Ovary (tissue), 10 donors: ENCODE measurements at regions of chr11 and their contacts with region 1.

Region 1: GRCh38 chr11:10307442-10308207 is 2.8 kb downstream of the ADM start:
- DNase-seq: peak; percentile 85 to 92 (median 90)
- H3K4me3 ChIP-seq: peak overlapping the region; percentile 70
- H3K27ac ChIP-seq: peak overlapping the region in 1 of 2 donors; percentile 76
- H3K4me1 ChIP-seq: peaks cover 10% of the 10 kb centered on the region
- H3K27me3 ChIP-seq: no peaks in the 10 kb centered on the region
- CTCF ChIP-seq: peak; percentile 96 to 98 (median 98)
- EP300 ChIP-seq: no peak
- POLR2A ChIP-seq: no peak

Region 2: GRCh38 chr11:9757809-9758636 is 549.6 kb before region 1 on chr11:
- intact Hi-C with region 1: loop called (anchors 2 to 5 kb)
- DNase-seq: peak; percentile 86 to 92 (median 90)
- H3K4me3 ChIP-seq: peak overlapping the region; percentile 56
- H3K27ac ChIP-seq: peak overlapping the region; percentile 78 to 83
- H3K4me1 ChIP-seq: peaks cover 16% of the 10 kb centered on the region
- H3K27me3 ChIP-seq: no peaks in the 10 kb centered on the region
- CTCF ChIP-seq: peak; percentile 72 to 98 (median 98)
- EP300 ChIP-seq: no peak
- POLR2A ChIP-seq: peak; percentile 41

Region 3: GRCh38 chr11:9972989-9973388 is 334.6 kb before region 1 on chr11:
- intact Hi-C with region 1: loop called in 2 of 4 experiments (anchors 5 to 10 kb)
- DNase-seq: peak in 1 of 5 donors; percentile 29
- H3K4me3 ChIP-seq: no peak overlapping the region
- H3K27ac ChIP-seq: no peak overlapping the region
- H3K4me1 ChIP-seq: no peaks in the 10 kb centered on the region
- H3K27me3 ChIP-seq: no peaks in the 10 kb centered on the region
- CTCF ChIP-seq: peak; percentile 18 to 67 (median 60)
- EP300 ChIP-seq: no peak
- POLR2A ChIP-seq: no peak

Region 4: DNA sequence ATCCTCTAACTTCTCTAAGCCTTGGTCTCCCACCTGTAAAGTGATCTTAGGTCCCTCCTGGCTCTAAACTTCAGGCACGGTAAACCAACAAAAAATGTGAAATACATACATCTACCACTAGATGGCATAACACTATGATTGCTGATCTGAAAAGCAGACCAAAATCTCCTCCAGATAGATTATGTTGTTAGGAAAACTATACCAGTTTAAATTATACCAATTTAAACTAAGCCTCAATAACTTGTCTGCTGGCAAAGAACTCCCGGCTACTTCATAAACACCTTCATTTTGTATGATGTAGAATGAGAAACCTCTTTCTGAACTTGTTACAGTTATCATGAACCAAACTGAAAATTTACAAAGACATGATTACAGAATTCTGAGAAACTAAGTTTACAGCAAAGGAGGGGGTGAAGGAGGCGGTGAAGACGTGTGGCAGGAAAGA is 99.5 kb before region 1 on chr11:
- intact Hi-C with region 1: loop called in 2 of 4 experiments (anchors 5 to 10 kb)
- DNase-seq: no peak
- H3K4me3 ChIP-seq: no peak overlapping the region
- H3K27ac ChIP-seq: no peak overlapping the region
- H3K4me1 ChIP-seq: peaks cover 2% of the 10 kb centered on the region
- H3K27me3 ChIP-seq: no peaks in the 10 kb centered on the region
- CTCF ChIP-seq: peak; percentile 39 to 75 (median 60)
- EP300 ChIP-seq: no peak
- POLR2A ChIP-seq: no peak